WTC11 (cell line): ENCODE measurements at regions of chr15 and their contacts with region 1.

Region 1: DNA sequence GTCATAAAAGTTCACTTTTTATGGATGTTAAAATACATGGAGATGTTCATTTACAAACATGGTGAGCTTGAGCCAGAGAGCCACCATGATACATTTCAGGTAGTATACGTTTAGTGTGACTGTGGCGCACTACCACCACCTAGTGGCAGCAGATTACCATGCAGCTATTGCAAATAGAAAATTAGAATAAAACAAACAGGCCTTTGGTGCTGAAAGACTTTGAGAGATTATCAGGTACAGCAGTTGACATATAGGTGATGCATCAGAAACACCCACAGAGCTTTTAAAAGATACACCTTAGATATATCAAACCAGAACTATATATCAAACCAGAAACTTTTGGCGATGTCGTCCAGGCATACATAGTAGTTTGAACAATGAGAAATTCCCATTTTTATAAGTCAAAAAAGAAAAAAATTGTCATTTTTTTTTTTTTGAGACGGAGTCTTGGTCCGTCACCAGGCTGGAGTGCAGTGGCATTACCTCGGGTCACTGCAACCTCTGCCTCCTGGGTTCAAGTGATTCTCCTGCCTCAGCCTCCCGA is 42.0 kb upstream of the ICE2 start:
- DNase-seq: peak; percentile 83
- ATAC-seq: peak; percentile 87
- H3K4me3 Mint-ChIP-seq: no peak overlapping the region
- H3K27ac Mint-ChIP-seq: no peak overlapping the region
- H3K4me1 Mint-ChIP-seq: peaks cover 15% of the 10 kb centered on the region
- H3K27me3 Mint-ChIP-seq: no peaks in the 10 kb centered on the region
- CTCF ChIP-seq: peak; percentile 77

Region 2: GRCh38 chr15:60362321-60363086 is 158.4 kb before region 1 on chr15:
- CTCF ChIA-PET with region 1: interaction called, 27 read pairs
- POLR2A ChIA-PET with region 1: no interaction called
- DNase-seq: no peak
- ATAC-seq: no peak
- H3K4me3 Mint-ChIP-seq: no peak overlapping the region
- H3K27ac Mint-ChIP-seq: no peak overlapping the region
- H3K4me1 Mint-ChIP-seq: no peaks in the 10 kb centered on the region
- H3K27me3 Mint-ChIP-seq: peaks cover 6% of the 10 kb centered on the region
- CTCF ChIP-seq: no peak

Region 3: GRCh38 chr15:60507596-60508424 is 13.1 kb before region 1 on chr15:
- CTCF ChIA-PET with region 1: interaction called, 78 read pairs
- POLR2A ChIA-PET with region 1: no interaction called
- DNase-seq: no peak
- ATAC-seq: peak; percentile 79
- H3K4me3 Mint-ChIP-seq: no peak overlapping the region
- H3K27ac Mint-ChIP-seq: no peak overlapping the region
- H3K4me1 Mint-ChIP-seq: peaks cover 6% of the 10 kb centered on the region
- H3K27me3 Mint-ChIP-seq: no peaks in the 10 kb centered on the region
- CTCF ChIP-seq: peak; percentile 77

Region 4: DNA sequence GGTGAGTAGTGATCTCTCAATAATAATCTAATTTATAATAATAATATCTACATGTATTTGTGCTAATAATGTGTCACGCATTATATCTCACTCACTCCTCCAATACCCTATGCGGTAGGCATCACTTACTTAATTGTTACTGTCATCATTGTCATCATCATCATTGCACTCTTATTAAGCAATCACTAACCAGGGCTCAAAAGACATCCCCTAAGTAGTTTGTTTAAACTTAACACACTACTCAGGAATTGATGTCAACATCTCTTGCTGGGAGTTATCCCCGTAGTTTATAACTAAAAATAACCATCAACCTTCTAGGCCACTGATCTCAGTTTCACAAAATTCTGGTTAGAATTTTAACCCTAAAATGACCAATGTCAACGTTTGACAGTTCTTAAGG is 14.8 kb after region 1 on chr15:
- CTCF ChIA-PET with region 1: interaction called, 21 read pairs
- POLR2A ChIA-PET with region 1: no interaction called
- DNase-seq: no peak
- ATAC-seq: no peak
- H3K4me3 Mint-ChIP-seq: no peak overlapping the region
- H3K27ac Mint-ChIP-seq: no peak overlapping the region
- H3K4me1 Mint-ChIP-seq: peaks cover 33% of the 10 kb centered on the region
- H3K27me3 Mint-ChIP-seq: no peaks in the 10 kb centered on the region
- CTCF ChIP-seq: no peak

Region 5: GRCh38 chr15:60544581-60545264 is 23.8 kb after region 1 on chr15:
- CTCF ChIA-PET with region 1: interaction called, 10 read pairs
- POLR2A ChIA-PET with region 1: no interaction called
- DNase-seq: no peak
- ATAC-seq: peak; percentile 50
- H3K4me3 Mint-ChIP-seq: no peak overlapping the region
- H3K27ac Mint-ChIP-seq: no peak overlapping the region
- H3K4me1 Mint-ChIP-seq: peaks cover 28% of the 10 kb centered on the region
- H3K27me3 Mint-ChIP-seq: no peaks in the 10 kb centered on the region
- CTCF ChIP-seq: no peak